Heart right ventricle (tissue), 16 donors: ENCODE measurements at regions of chr12 and their contacts with region 1.

Region 1: GRCh38 chr12:64890873-64891468 is 66.5 kb downstream of the TBC1D30 start:
- DNase-seq: no peak
- ATAC-seq: peak in 7 of 8 donors; percentile 41 to 69 (median 63)
- H3K4me3 ChIP-seq: no peak overlapping the region
- H3K27ac ChIP-seq: no peak overlapping the region
- H3K4me1 ChIP-seq: no peaks in the 10 kb centered on the region
- H3K27me3 ChIP-seq: peaks cover 0 to 21% (median 13%) of the 10 kb centered on the region in 7 donors
- CTCF ChIP-seq: peak; percentile 65 to 89 (median 83)

Region 2: DNA sequence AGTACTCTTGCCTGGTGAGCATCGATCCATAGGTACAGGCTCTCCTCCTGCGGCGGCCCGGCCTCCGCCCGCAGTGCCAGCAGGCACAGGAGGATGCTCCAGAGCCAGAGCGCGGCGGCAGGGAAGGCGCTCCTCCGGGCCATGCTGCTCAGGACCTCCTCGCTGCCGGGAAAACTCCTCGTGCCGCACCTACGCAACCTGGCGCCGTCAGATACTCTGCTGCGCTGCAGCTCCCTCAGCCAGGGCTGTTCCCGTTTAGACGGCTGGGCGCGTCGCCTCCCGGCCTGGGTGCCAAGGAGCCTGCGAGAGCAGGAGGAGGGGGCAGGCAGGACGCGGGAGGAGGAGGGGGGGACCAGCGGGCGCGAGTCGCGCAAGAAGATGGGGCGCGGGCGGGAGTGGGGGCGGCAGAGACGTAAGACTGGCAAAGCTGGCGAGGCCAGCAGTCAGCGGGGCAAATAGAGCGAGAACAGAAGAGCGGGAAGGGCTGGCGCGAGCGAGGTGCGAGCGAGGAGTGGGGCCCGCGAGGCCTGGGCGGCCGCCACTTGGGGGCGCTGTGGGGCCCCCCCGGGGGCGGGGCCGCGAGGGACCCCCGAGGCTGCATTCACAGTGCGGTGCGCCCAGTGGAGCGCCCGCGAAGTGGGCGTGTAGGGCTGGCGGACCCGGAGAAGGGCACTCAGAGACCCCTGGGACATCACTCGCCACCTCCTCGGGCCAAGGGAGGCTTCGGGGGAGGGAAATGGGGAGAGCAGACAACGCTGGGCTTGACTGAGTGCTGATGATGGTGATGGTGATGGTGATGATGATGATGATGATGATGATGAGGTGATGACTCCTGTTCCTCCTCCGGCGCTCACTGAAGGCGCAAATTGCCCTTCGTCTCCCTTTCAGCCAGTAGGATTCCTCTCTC is 230.3 kb after region 1 on chr12 and contains the start of gene WIF1:
- intact Hi-C with region 1: loop called in 7 of 10 experiments (anchors 1 to 10 kb)
- DNase-seq: peak in 1 of 2 donors; percentile 14
- ATAC-seq: peak in 2 of 8 donors; percentile 34 to 51
- H3K4me3 ChIP-seq: peak within 1 kb of the TSS in 9 of 10 donors; percentile 21 to 48 (median 30)
- H3K27ac ChIP-seq: no peak within 1 kb of the TSS
- H3K4me1 ChIP-seq: peaks cover 4 to 12% (median 9%) of the 10 kb centered on the region in 9 donors
- H3K27me3 ChIP-seq: peaks cover 7 to 100% (median 97%) of the 10 kb centered on the region in 7 donors
- CTCF ChIP-seq: peak in 7 of 9 donors; percentile 11 to 44 (median 31)
- total RNA-seq, gene WIF1: not detected

Region 3: DNA sequence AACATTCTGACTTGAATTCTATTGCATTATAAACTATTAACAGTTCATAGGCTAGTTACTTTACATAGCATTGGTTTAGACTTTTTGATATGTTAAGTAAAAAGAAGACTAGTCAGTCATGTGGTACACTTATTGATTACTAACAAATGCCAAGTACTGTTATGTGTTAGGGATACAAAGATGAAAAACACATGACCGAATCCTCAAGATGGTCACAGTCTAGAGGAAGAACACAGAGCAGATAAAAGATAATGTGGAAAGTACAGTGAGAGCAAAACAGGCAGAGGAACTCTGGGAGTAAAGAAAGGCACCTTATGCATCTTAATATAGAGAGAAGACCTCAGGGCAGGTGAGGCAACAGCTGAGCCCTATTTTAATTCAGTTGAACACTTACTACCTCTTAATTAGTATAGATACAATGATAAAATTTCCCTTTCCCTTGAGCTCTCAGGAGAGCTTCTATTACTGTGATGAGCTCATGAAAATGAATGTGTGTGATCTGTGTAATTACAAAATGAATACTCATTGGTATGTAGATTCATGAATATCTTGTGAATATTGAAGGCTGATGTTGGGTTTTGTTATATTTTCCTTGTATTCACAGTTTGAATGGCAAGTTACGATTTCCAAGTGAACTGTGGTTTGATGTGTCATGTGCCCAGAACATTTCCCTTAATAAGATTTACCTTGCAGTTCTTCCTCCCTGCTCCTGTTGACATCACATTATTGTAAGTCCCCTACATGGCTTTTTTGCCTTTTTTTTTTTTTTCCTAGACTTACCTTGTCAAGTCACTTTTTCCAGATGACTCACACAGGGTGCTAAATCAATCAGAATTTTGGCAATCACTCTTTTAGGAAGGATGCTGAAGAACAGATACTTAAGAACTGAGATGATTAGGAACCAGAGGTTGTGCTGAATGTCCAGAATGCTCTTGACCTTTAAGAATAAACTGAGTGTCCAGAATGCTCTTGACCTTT is 358.0 kb after region 1 on chr12:
- intact Hi-C with region 1: loop called in 1 of 10 experiments (anchors 10 kb)
- DNase-seq: no peak
- ATAC-seq: no peak
- H3K4me3 ChIP-seq: no peak overlapping the region
- H3K27ac ChIP-seq: no peak overlapping the region
- H3K4me1 ChIP-seq: no peaks in the 10 kb centered on the region
- H3K27me3 ChIP-seq: no peaks in the 10 kb centered on the region
- CTCF ChIP-seq: no peak

Region 4: GRCh38 chr12:66087365-66087943 is 1196.5 kb after region 1 on chr12:
- intact Hi-C with region 1: loop called in 4 of 10 experiments (anchors 5 kb)
- DNase-seq: peak; percentile 21 to 66
- ATAC-seq: peak in 4 of 8 donors; percentile 46 to 57 (median 51)
- H3K4me3 ChIP-seq: no peak overlapping the region
- H3K27ac ChIP-seq: no peak overlapping the region
- H3K4me1 ChIP-seq: peaks cover 0 to 5% (median 0%) of the 10 kb centered on the region in 9 donors
- H3K27me3 ChIP-seq: peaks cover 0 to 8% (median 0%) of the 10 kb centered on the region in 7 donors
- CTCF ChIP-seq: peak; percentile 45 to 86 (median 80)

Region 5: DNA sequence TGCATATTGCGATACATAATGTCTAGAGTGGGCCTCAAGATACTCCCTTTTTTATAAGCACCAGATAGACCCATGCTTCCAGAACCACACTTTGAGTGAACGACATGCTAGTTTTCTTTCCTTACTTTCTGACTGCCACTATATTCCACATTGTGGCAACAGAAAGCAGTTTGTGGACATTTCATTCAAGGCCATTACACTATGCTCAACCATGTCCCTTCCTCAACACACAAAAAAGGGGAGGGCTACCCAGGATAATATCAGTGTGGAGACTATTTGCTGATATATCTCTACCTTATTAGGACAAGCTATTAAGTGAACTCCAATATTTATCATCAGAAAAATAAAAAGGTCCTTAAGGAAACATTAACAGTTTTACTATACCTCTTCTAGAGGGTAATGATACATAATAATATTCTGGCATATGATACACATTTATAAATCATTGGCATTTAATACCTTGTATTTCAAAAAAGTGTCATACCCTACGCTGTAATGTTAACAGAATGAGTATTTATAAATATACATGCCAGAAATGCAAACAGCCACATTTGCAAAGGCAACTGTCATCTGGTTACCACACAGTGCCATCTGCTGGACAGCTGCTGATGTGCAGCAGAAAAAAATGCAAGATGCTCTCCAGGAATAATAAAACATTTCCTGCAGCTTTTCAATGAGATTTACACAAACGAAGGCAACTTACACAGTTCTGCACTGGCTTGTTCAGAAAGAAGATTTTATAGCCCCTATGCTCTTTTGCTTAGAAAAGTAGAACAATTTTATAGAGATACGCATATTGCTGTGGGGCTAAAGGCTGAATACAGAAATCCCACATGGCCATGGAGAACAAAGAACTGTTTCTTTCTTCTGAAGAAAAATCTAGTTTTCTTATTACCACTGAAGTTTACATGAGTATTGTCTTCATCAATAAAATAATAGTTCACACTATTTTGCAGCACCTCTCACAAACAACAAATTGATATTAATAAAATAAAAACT is 1970.1 kb after region 1 on chr12:
- intact Hi-C with region 1: loop called in 1 of 10 experiments (anchors 5 kb)
- DNase-seq: peak; percentile 19 to 28
- ATAC-seq: peak in 1 of 8 donors; percentile 39
- H3K4me3 ChIP-seq: no peak overlapping the region
- H3K27ac ChIP-seq: no peak overlapping the region
- H3K4me1 ChIP-seq: no peaks in the 10 kb centered on the region
- H3K27me3 ChIP-seq: peaks cover 0 to 13% (median 3%) of the 10 kb centered on the region in 7 donors
- CTCF ChIP-seq: peak; percentile 61 to 92 (median 84)